ENCODE measurements at regions of chr15 and their contacts with region 1.

Region 1: DNA sequence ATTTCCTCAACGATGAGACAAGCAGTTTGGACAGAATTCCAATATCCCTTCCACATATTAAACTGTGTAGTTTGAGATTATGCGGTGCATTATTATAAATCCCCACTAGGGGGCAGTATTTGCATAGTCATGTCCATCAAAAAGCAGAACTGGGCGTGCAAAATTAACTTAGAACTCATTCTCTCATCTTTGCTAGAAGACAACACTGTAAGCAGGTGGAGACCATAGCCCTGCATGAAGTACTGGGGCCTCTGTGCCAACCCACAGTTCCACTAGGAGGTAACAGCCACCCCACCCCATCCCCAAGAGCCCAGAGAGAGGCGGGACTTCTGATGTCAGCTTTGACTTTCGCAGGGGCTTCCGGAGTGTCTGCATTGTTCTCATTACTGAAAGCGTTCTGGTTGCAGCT is 106.6 kb upstream of the TMC3 start:
- DNase-seq: peak; percentile 68
- ATAC-seq: peak; percentile 24
- H3K4me3 ChIP-seq: no peak overlapping the region
- H3K4me3 Mint-ChIP-seq: no peak overlapping the region
- H3K27ac ChIP-seq: no peak overlapping the region
- H3K27ac Mint-ChIP-seq: peak overlapping the region; percentile 67
- H3K4me1 ChIP-seq: no peaks in the 10 kb centered on the region
- H3K4me1 Mint-ChIP-seq: peaks cover 7% of the 10 kb centered on the region
- H3K27me3 ChIP-seq: no peaks in the 10 kb centered on the region
- H3K27me3 Mint-ChIP-seq: peaks cover 6% of the 10 kb centered on the region
- CTCF ChIP-seq: peak; percentile 95

Region 2: GRCh38 chr15:81419332-81419943 is 61.2 kb before region 1 on chr15:
- CTCF ChIA-PET with region 1: no interaction called
- POLR2A ChIA-PET with region 1: no interaction called
- intact Hi-C with region 1: no loop called
- DNase-seq: no peak
- ATAC-seq: no peak
- H3K4me3 ChIP-seq: no peak overlapping the region
- H3K4me3 Mint-ChIP-seq: no peak overlapping the region
- H3K27ac ChIP-seq: no peak overlapping the region
- H3K27ac Mint-ChIP-seq: no peak overlapping the region
- H3K4me1 ChIP-seq: peaks cover 0 to 4% of the 10 kb centered on the region in 2 donors
- H3K4me1 Mint-ChIP-seq: peaks cover 4% of the 10 kb centered on the region
- H3K27me3 ChIP-seq: peaks cover 0 to 5% (median 0%) of the 10 kb centered on the region in 4 experiments
- H3K27me3 Mint-ChIP-seq: peaks cover 15% of the 10 kb centered on the region
- CTCF ChIP-seq: no peak

Region 3: GRCh38 chr15:81469154-81469553 is 11.5 kb before region 1 on chr15:
- CTCF ChIA-PET with region 1: interaction called, 15 read pairs
- POLR2A ChIA-PET with region 1: no interaction called
- intact Hi-C with region 1: no loop called
- DNase-seq: no peak
- ATAC-seq: no peak
- H3K4me3 ChIP-seq: no peak overlapping the region
- H3K4me3 Mint-ChIP-seq: no peak overlapping the region
- H3K27ac ChIP-seq: no peak overlapping the region
- H3K27ac Mint-ChIP-seq: no peak overlapping the region
- H3K4me1 ChIP-seq: no peaks in the 10 kb centered on the region
- H3K4me1 Mint-ChIP-seq: no peaks in the 10 kb centered on the region
- H3K27me3 ChIP-seq: no peaks in the 10 kb centered on the region
- H3K27me3 Mint-ChIP-seq: peaks cover 26% of the 10 kb centered on the region
- CTCF ChIP-seq: no peak

Region 4: GRCh38 chr15:81625896-81626295 is 145.2 kb after region 1 on chr15:
- CTCF ChIA-PET with region 1: no interaction called
- POLR2A ChIA-PET with region 1: no interaction called
- intact Hi-C with region 1: no loop called
- DNase-seq: no peak
- ATAC-seq: no peak
- H3K4me3 ChIP-seq: no peak overlapping the region
- H3K4me3 Mint-ChIP-seq: no peak overlapping the region
- H3K27ac ChIP-seq: no peak overlapping the region
- H3K27ac Mint-ChIP-seq: no peak overlapping the region
- H3K4me1 ChIP-seq: no peaks in the 10 kb centered on the region
- H3K4me1 Mint-ChIP-seq: no peaks in the 10 kb centered on the region
- H3K27me3 ChIP-seq: no peaks in the 10 kb centered on the region
- H3K27me3 Mint-ChIP-seq: peaks cover 2% of the 10 kb centered on the region
- CTCF ChIP-seq: no peak

Region 5: GRCh38 chr15:81939604-81940440 is 459.2 kb after region 1 on chr15:
- CTCF ChIA-PET with region 1: interaction called, 18 read pairs
- POLR2A ChIA-PET with region 1: no interaction called
- intact Hi-C with region 1: loop called (anchors 5 kb)
- DNase-seq: peak; percentile 33
- ATAC-seq: no peak
- H3K4me3 ChIP-seq: no peak overlapping the region
- H3K4me3 Mint-ChIP-seq: no peak overlapping the region
- H3K27ac ChIP-seq: no peak overlapping the region
- H3K27ac Mint-ChIP-seq: no peak overlapping the region
- H3K4me1 ChIP-seq: no peaks in the 10 kb centered on the region
- H3K4me1 Mint-ChIP-seq: no peaks in the 10 kb centered on the region
- H3K27me3 ChIP-seq: peaks cover 0 to 2% (median 0%) of the 10 kb centered on the region in 4 experiments
- H3K27me3 Mint-ChIP-seq: peaks cover 21% of the 10 kb centered on the region
- CTCF ChIP-seq: peak; percentile 78

Region 6: DNA sequence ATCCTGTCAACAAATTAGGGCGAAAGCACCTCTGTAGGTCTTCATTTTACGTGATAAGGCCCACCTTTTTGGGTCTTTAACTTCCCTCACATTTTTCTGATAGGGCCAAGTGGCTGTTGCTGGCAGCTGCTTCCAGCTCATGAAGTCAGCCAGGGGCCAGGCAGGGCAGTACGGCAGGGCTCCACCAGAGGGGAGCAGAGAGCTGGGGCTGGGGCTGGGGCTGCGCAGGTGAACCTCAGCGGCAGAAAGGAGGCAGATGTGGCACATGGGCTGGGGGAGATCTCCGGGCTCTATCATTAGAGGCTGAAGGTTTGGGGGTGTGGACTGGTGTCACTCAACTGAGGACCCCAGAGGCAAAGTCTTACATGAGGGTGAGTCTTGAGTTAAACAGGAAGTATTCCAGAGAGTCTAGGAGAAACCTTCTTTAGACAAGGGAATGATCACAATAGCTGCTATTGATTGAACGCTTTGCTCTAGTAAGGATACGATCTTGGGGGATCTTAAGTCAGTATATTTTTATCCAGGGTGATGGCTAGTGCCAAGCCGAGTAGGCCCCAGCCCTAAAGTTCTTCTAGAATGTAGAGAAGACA is 627.9 kb after region 1 on chr15:
- CTCF ChIA-PET with region 1: interaction called, 4 read pairs
- POLR2A ChIA-PET with region 1: no interaction called
- intact Hi-C with region 1: loop called (anchors 10 kb)
- DNase-seq: peak; percentile 65
- ATAC-seq: peak; percentile 86
- H3K4me3 ChIP-seq: no peak overlapping the region
- H3K4me3 Mint-ChIP-seq: no peak overlapping the region
- H3K27ac ChIP-seq: no peak overlapping the region
- H3K27ac Mint-ChIP-seq: no peak overlapping the region
- H3K4me1 ChIP-seq: no peaks in the 10 kb centered on the region
- H3K4me1 Mint-ChIP-seq: no peaks in the 10 kb centered on the region
- H3K27me3 ChIP-seq: no peaks in the 10 kb centered on the region
- H3K27me3 Mint-ChIP-seq: peaks cover 4% of the 10 kb centered on the region
- CTCF ChIP-seq: peak; percentile 79

Region 7: GRCh38 chr15:82139823-82140268 is 659.2 kb after region 1 on chr15:
- CTCF ChIA-PET with region 1: interaction called, 5 read pairs
- POLR2A ChIA-PET with region 1: no interaction called
- intact Hi-C with region 1: loop called (anchors 5 kb)
- DNase-seq: peak; percentile 28
- ATAC-seq: no peak
- H3K4me3 ChIP-seq: no peak overlapping the region
- H3K4me3 Mint-ChIP-seq: no peak overlapping the region
- H3K27ac ChIP-seq: no peak overlapping the region
- H3K27ac Mint-ChIP-seq: no peak overlapping the region
- H3K4me1 ChIP-seq: no peaks in the 10 kb centered on the region
- H3K4me1 Mint-ChIP-seq: no peaks in the 10 kb centered on the region
- H3K27me3 ChIP-seq: no peaks in the 10 kb centered on the region
- H3K27me3 Mint-ChIP-seq: no peaks in the 10 kb centered on the region
- CTCF ChIP-seq: peak; percentile 72

Region 8: GRCh38 chr15:82197733-82198594 is 717.3 kb after region 1 on chr15:
- CTCF ChIA-PET with region 1: interaction called, 14 read pairs
- POLR2A ChIA-PET with region 1: no interaction called
- intact Hi-C with region 1: no loop called
- DNase-seq: peak; percentile 67
- ATAC-seq: peak; percentile 71
- H3K4me3 ChIP-seq: no peak overlapping the region
- H3K4me3 Mint-ChIP-seq: no peak overlapping the region
- H3K27ac ChIP-seq: no peak overlapping the region
- H3K27ac Mint-ChIP-seq: no peak overlapping the region
- H3K4me1 ChIP-seq: peaks cover 0 to 5% of the 10 kb centered on the region in 2 donors
- H3K4me1 Mint-ChIP-seq: peaks cover 6% of the 10 kb centered on the region
- H3K27me3 ChIP-seq: no peaks in the 10 kb centered on the region
- H3K27me3 Mint-ChIP-seq: no peaks in the 10 kb centered on the region
- CTCF ChIP-seq: peak; percentile 81

Measured in B cell (primary cell).